ENCODE measurements at regions of chr14 and their contacts with region 1.

Region 1: GRCh38 chr14:25097120-25097519 is 47.2 kb upstream of the STXBP6 start:
- DNase-seq: no peak
- ATAC-seq: no peak
- H3K4me3 ChIP-seq: no peak overlapping the region
- H3K4me3 Mint-ChIP-seq: no peak overlapping the region
- H3K27ac ChIP-seq: no peak overlapping the region
- H3K27ac Mint-ChIP-seq: no peak overlapping the region
- H3K4me1 ChIP-seq: no peaks in the 10 kb centered on the region
- H3K4me1 Mint-ChIP-seq: no peaks in the 10 kb centered on the region
- H3K27me3 ChIP-seq: peaks cover 0 to 7% of the 10 kb centered on the region in 2 experiments
- H3K27me3 Mint-ChIP-seq: peaks cover 27 to 29% of the 10 kb centered on the region in 2 donors

Region 2: DNA sequence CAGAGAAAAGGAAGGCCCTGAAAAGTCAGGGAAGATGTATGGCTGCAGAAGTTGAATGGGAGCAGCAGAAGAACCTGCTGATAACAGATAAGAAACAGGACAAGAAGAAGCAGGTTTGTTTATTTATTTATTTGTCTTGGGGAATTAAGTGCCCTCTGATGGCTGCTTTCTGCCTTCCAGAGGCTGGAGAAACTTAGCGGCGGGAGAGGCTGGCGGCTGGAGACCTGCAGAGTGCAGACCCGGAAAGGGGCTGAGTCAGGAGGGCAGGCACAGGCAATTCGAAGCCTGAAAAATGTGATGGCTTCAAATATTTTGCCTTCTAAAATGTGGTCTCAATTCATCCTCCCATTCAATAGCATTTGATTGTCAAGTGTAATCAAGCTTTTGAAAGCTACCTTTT is 294.9 kb before region 1 on chr14:
- CTCF ChIA-PET with region 1: no interaction called
- POLR2A ChIA-PET with region 1: interaction called in 1 of 2 experiments, 11 read pairs
- DNase-seq: no peak
- ATAC-seq: no peak
- H3K4me3 ChIP-seq: no peak overlapping the region
- H3K4me3 Mint-ChIP-seq: no peak overlapping the region
- H3K27ac ChIP-seq: no peak overlapping the region
- H3K27ac Mint-ChIP-seq: no peak overlapping the region
- H3K4me1 ChIP-seq: no peaks in the 10 kb centered on the region
- H3K4me1 Mint-ChIP-seq: no peaks in the 10 kb centered on the region
- H3K27me3 ChIP-seq: no peaks in the 10 kb centered on the region
- H3K27me3 Mint-ChIP-seq: peaks cover 2 to 15% of the 10 kb centered on the region in 2 donors

Region 3: DNA sequence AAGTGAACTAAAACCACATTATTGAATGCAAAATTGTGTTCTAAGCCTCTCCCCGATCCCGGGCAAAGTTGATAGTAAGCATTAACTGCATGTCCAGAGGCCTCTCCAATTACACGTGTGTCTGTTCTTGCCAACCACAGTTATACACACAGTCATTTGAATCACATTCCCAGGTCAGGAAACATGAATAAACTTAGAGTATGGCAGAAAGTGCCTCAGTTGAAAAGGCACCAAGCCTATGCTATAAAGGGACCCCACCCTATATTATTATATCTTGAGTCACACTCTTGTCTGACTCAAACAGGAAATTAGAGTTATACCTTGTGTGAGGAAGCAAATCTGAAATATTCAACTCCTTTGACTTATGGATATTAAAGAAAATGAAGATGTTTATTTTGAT is 81.1 kb after region 1 on chr14:
- CTCF ChIA-PET with region 1: no interaction called
- POLR2A ChIA-PET with region 1: no interaction called
- DNase-seq: no peak
- ATAC-seq: no peak
- H3K4me3 ChIP-seq: no peak overlapping the region
- H3K4me3 Mint-ChIP-seq: no peak overlapping the region
- H3K27ac ChIP-seq: no peak overlapping the region
- H3K27ac Mint-ChIP-seq: no peak overlapping the region
- H3K4me1 ChIP-seq: no peaks in the 10 kb centered on the region
- H3K4me1 Mint-ChIP-seq: no peaks in the 10 kb centered on the region
- H3K27me3 ChIP-seq: no peaks in the 10 kb centered on the region
- H3K27me3 Mint-ChIP-seq: peaks cover 4 to 14% of the 10 kb centered on the region in 2 donors

Measured in T-cell (primary cell).